ENCODE measurements at regions of chrX and their contacts with region 1.

Region 1: GRCh38 chrX:19121898-19122640 is at the start of gene ADGRG2:
- DNase-seq: peak in 1 of 2 donors; percentile 70
- H3K4me3 ChIP-seq: peak within 1 kb of the TSS; percentile 57 to 72
- H3K27ac ChIP-seq: peak within 1 kb of the TSS in 1 of 2 donors; percentile 56
- H3K4me1 ChIP-seq: no peaks in the 10 kb centered on the region
- H3K27me3 ChIP-seq: no peaks in the 10 kb centered on the region
- CTCF ChIP-seq: peak in 1 of 3 experiments; percentile 31
- total RNA-seq, gene ADGRG2: 4.3 TPM

Region 2: GRCh38 chrX:18931972-18932371 is 190.1 kb before region 1 on chrX:
- intact Hi-C with region 1: loop called (anchors 5 kb)
- DNase-seq: no peak
- H3K4me3 ChIP-seq: no peak overlapping the region
- H3K27ac ChIP-seq: no peak overlapping the region
- H3K4me1 ChIP-seq: no peaks in the 10 kb centered on the region
- H3K27me3 ChIP-seq: no peaks in the 10 kb centered on the region
- CTCF ChIP-seq: peak; percentile 7 to 34 (median 7)

Measured in ascending aorta (tissue), 2 donors.